Prostate gland (tissue), 2 donors: ENCODE measurements at regions of chr10 and their contacts with region 1.

Region 1: GRCh38 chr10:118754720-118755480 is at the start of gene CACUL1:
- DNase-seq: peak; percentile 100
- H3K4me3 ChIP-seq: peak within 1 kb of the TSS; percentile 76 to 98
- H3K27ac ChIP-seq: peak within 1 kb of the TSS; percentile 88 to 90
- H3K4me1 ChIP-seq: peaks cover 4% of the 10 kb centered on the region
- H3K27me3 ChIP-seq: no peaks in the 10 kb centered on the region
- CTCF ChIP-seq: peak in 2 of 4 experiments; percentile 6 to 7
- POLR2A ChIP-seq: peak; percentile 89
- total RNA-seq, gene CACUL1: 23.7 to 38.1 TPM

Region 2: DNA sequence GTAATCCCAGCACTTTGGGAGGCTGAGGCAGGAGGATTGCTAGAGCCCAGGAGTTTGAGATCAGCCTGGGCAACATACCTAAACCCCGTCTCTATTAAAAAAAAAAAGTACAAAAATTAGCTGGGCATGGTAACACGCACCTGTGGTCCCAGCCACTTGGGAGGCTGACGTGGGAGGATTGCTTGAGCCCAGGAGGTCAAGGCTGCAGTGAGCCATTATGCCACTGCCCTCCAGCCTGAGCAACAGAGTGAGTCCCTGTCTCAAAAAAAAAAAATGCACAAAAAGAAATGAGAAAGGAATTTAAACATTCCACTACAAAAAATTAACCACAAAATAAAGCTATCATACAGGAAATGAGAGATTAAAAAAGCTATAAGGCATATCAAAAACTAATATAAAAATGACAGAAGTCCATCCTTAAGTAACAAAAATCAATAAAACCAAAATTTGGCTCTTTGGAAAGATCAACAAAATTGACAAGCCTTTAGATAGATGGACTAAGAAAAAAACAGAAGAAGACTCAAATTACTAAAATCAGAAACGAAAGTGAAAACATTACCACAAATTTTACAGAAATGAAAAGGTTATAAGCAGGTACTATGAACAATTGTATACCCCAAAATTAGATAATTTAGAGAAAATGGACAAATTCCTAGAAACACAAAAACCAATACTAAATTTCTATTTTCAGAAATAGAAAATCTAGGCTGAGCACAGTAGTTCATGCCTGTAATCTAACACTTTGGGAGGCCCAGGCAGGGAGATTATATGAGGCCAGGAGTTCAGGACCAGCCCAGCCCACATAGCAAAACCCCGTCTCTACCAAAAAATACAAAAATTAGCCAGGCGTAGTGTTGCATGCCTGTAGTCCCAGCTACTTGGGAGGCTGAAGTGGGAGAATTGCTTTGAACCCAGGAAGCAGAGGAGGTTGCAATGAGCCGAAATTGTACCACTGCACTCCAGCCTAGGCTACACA is 232.2 kb after region 1 on chr10:
- intact Hi-C with region 1: no loop called
- DNase-seq: no peak
- H3K4me3 ChIP-seq: no peak overlapping the region
- H3K27ac ChIP-seq: no peak overlapping the region
- H3K4me1 ChIP-seq: no peaks in the 10 kb centered on the region
- H3K27me3 ChIP-seq: no peaks in the 10 kb centered on the region
- CTCF ChIP-seq: no peak
- POLR2A ChIP-seq: no peak

Region 3: GRCh38 chr10:119028900-119029612 is 274.2 kb after region 1 on chr10:
- intact Hi-C with region 1: loop called (anchors 5 kb)
- DNase-seq: peak; percentile 87
- H3K4me3 ChIP-seq: peak overlapping the region; percentile 46 to 55
- H3K27ac ChIP-seq: peak overlapping the region; percentile 53 to 57
- H3K4me1 ChIP-seq: peaks cover 6% of the 10 kb centered on the region
- H3K27me3 ChIP-seq: no peaks in the 10 kb centered on the region
- CTCF ChIP-seq: peak in 2 of 4 experiments; percentile 46 to 51
- POLR2A ChIP-seq: no peak